Activated CD8-positive, alpha-beta T cell treated with anti-CD3 and anti-CD28 coated beads for 36 hours (primary cell): ENCODE measurements at regions of chr15 and their contacts with region 1.

Region 1: DNA sequence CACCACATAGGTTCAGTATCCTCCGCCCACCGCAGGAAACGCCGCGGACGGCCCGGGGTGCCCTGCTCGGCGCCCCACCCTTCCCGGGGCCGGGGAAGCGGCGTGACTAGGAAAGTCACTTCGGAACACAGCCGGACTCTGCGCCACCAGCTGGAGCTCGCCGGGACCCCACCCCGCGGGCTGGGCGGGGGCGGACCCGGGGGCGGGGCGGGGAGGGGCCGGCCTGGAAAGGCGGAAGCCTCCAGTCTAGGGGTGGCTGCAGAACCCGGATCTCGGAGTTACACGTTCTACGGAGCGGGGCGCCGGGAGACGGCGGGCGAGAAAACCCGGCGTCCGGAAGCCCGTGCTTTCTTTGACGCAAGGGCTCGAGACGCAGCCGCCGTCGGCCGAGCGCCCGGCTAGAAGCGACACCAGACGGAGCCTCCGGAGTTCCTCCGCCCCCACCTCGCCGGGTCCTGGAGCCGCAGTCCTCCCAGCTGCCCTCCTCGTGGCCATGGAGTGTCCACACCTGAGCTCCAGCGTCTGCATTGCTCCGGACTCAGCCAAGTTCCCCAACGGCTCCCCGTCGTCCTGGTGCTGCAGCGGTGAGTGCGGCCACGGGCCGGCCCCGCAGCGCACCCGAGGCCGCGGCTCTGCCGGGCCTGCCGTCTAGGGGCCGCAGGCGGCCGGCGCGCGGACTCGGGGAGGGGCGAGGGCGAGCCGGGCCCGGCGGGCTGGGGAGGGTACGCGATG is at the start of gene USP3:
- DNase-seq: peak; percentile 93
- ATAC-seq: peak; percentile 69
- H3K4me3 Mint-ChIP-seq: peak within 1 kb of the TSS; percentile 96
- H3K27ac Mint-ChIP-seq: peak within 1 kb of the TSS; percentile 99
- H3K4me1 Mint-ChIP-seq: peaks cover 74% of the 10 kb centered on the region
- H3K27me3 Mint-ChIP-seq: no peaks in the 10 kb centered on the region
- CTCF ChIP-seq: peak; percentile 65
- total RNA-seq, gene USP3: 57.1 to 58.6 TPM

Region 2: DNA sequence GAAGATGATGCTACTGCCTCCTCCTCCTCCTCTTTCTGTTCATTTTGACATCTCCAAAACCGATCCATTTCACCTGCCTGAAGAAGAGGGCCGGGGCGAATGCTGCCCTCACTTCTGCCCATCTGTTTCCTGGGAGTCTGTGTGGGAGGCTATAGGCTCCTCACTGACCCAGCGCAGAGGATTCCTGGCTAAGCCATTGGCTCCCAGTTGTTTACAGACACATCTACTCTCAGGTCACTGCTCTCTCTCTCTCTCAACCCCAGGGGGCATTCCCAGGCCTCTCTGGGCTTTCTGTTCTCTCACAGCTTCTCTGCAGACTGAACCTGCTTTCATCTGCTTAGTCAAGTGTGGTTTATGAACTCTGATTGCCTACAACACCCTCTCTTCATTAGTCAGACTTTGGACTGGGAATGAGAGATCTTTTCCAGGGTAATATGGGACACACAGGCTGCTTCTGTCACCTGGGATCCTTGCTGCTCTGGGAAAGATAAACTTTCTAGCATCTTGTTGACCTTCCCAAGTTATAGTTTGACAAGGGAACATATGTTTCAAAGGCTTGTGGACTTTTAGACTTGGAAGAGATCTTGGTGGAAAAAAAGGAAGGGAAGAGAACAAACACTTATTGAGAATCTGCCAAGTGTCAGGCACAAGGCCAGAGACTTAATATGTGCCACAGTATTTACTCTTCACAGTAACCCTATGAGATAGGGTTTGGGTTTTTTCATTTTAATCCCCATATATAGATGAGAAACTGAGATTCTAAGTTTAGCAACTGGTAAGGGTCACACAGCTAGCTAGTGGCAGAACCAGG is 30.2 kb before region 1 on chr15:
- CTCF ChIA-PET with region 1: interaction called, 9 read pairs
- POLR2A ChIA-PET with region 1: interaction called, 22 read pairs
- intact Hi-C with region 1: loop called (anchors 5 kb)
- DNase-seq: peak; percentile 82
- ATAC-seq: peak; percentile 77
- H3K4me3 Mint-ChIP-seq: peak overlapping the region; percentile 34
- H3K27ac Mint-ChIP-seq: peak overlapping the region; percentile 92
- H3K4me1 Mint-ChIP-seq: peaks cover 52% of the 10 kb centered on the region
- H3K27me3 Mint-ChIP-seq: no peaks in the 10 kb centered on the region
- CTCF ChIP-seq: no peak

Region 3: DNA sequence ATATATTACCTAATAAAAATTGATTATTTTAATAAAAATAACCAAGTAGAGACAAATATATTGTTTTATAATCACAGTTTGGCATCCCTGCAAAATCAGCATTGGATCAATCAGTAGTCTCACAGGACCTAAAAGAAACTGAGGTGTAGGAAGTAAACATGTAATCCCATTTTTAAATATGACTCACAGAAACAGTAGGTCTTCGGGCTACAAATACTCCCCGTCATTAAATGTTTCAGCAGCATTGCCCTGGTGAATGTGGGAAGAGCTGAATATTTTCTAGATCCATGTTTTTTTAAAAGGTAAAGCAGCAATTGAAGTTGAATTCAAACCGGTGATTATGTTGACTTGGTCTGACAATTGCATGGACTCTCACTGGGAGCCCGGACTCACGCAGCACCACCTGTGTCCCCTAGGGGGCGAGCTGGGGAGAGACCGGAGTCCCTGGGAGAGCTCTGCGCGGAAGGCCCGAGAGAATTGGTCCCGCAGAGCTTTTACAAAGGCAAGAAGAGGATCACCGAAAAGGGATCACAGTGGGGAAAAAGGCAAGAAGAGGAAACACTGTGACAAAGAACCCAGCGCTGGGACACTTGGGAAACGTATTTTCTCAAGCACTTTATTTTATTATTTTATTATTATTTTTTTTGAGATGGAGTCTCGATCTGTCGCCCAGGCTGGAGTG is 17.2 kb before region 1 on chr15:
- CTCF ChIA-PET with region 1: interaction called, 53 read pairs
- POLR2A ChIA-PET with region 1: interaction called, 62 read pairs
- intact Hi-C with region 1: no loop called
- DNase-seq: peak; percentile 94
- ATAC-seq: peak; percentile 91
- H3K4me3 Mint-ChIP-seq: peak overlapping the region; percentile 14
- H3K27ac Mint-ChIP-seq: peak overlapping the region; percentile 62
- H3K4me1 Mint-ChIP-seq: peaks cover 54% of the 10 kb centered on the region
- H3K27me3 Mint-ChIP-seq: no peaks in the 10 kb centered on the region
- CTCF ChIP-seq: peak; percentile 98

Region 4: GRCh38 chr15:63531586-63531985 is 27.2 kb after region 1 on chr15:
- CTCF ChIA-PET with region 1: interaction called, 10 read pairs
- POLR2A ChIA-PET with region 1: interaction called, 6 read pairs
- intact Hi-C with region 1: no loop called
- DNase-seq: no peak
- ATAC-seq: peak; percentile 47
- H3K4me3 Mint-ChIP-seq: no peak overlapping the region
- H3K27ac Mint-ChIP-seq: no peak overlapping the region
- H3K4me1 Mint-ChIP-seq: peaks cover 88% of the 10 kb centered on the region
- H3K27me3 Mint-ChIP-seq: no peaks in the 10 kb centered on the region
- CTCF ChIP-seq: peak; percentile 34

Region 5: DNA sequence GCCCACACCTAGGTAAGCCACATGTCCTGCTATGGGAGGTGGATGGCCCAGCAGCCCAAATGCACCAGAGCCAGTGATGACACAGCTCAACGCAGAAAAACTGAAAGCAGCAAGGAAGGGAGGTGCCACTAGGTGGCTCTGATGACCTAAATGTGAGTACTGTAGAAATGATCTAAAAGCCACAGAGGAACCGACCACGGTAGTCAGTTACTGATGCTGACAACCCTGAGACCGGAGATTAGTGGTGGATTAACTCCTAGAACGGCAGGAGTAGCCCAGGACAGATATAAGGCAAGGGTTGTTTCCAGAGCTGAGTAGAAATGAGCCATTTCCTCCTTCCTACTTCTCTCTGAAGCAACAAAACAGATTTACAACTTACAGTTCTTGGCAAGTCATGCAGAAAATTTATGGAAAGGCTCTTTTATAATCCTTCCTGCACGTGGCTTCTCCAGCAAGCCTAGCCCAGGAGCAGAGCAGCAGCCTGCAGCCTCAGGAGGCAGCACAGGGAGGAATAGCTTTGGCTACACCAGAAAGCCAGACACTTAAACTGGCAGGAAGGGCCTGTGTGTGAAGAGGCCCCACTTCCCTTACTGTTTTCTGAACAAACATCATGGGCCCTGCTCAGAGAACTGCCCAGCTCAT is 105.9 kb after region 1 on chr15:
- CTCF ChIA-PET with region 1: interaction called, 4 read pairs
- POLR2A ChIA-PET with region 1: interaction called, 12 read pairs
- intact Hi-C with region 1: no loop called
- DNase-seq: peak; percentile 93
- ATAC-seq: peak; percentile 87
- H3K4me3 Mint-ChIP-seq: no peak overlapping the region
- H3K27ac Mint-ChIP-seq: peak overlapping the region; percentile 91
- H3K4me1 Mint-ChIP-seq: peaks cover 32% of the 10 kb centered on the region
- H3K27me3 Mint-ChIP-seq: no peaks in the 10 kb centered on the region
- CTCF ChIP-seq: peak; percentile 81